Activated B cell treated with CpG ODN at 0.5 μM for 24 hours (primary cell): ENCODE measurements at regions of chr18 and their contacts with region 1.

Region 1: GRCh38 chr18:75478996-75479880 is 51.7 kb upstream of the SMIM21 start:
- DNase-seq: no peak
- ATAC-seq: no peak
- H3K4me3 Mint-ChIP-seq: no peak overlapping the region
- H3K27ac Mint-ChIP-seq: no peak overlapping the region
- H3K4me1 Mint-ChIP-seq: no peaks in the 10 kb centered on the region
- H3K27me3 Mint-ChIP-seq: no peaks in the 10 kb centered on the region
- CTCF ChIP-seq: no peak

Region 2: GRCh38 chr18:74551936-74552555 is 927.2 kb before region 1 on chr18:
- CTCF ChIA-PET with region 1: no interaction called
- POLR2A ChIA-PET with region 1: no interaction called
- intact Hi-C with region 1: loop called (anchors 5 kb)
- DNase-seq: peak; percentile 41
- ATAC-seq: peak; percentile 97
- H3K4me3 Mint-ChIP-seq: no peak overlapping the region
- H3K27ac Mint-ChIP-seq: no peak overlapping the region
- H3K4me1 Mint-ChIP-seq: no peaks in the 10 kb centered on the region
- H3K27me3 Mint-ChIP-seq: peaks cover 14% of the 10 kb centered on the region
- CTCF ChIP-seq: no peak

Region 3: GRCh38 chr18:74806700-74807416 is 672.4 kb before region 1 on chr18:
- CTCF ChIA-PET with region 1: no interaction called
- POLR2A ChIA-PET with region 1: no interaction called
- intact Hi-C with region 1: loop called (anchors 5 kb)
- DNase-seq: no peak
- ATAC-seq: peak; percentile 95
- H3K4me3 Mint-ChIP-seq: peak overlapping the region; percentile 46
- H3K27ac Mint-ChIP-seq: peak overlapping the region; percentile 25
- H3K4me1 Mint-ChIP-seq: peaks cover 17% of the 10 kb centered on the region
- H3K27me3 Mint-ChIP-seq: no peaks in the 10 kb centered on the region
- CTCF ChIP-seq: no peak

Region 4: GRCh38 chr18:74896390-74896991 is 582.7 kb before region 1 on chr18:
- CTCF ChIA-PET with region 1: interaction called, 3 read pairs
- POLR2A ChIA-PET with region 1: no interaction called
- intact Hi-C with region 1: loop called (anchors 5 kb)
- DNase-seq: no peak
- ATAC-seq: peak; percentile 31
- H3K4me3 Mint-ChIP-seq: no peak overlapping the region
- H3K27ac Mint-ChIP-seq: no peak overlapping the region
- H3K4me1 Mint-ChIP-seq: no peaks in the 10 kb centered on the region
- H3K27me3 Mint-ChIP-seq: no peaks in the 10 kb centered on the region
- CTCF ChIP-seq: no peak

Region 5: GRCh38 chr18:75173125-75173432 is 306.2 kb before region 1 on chr18:
- CTCF ChIA-PET with region 1: no interaction called
- POLR2A ChIA-PET with region 1: no interaction called
- intact Hi-C with region 1: loop called (anchors 5 kb)
- DNase-seq: no peak
- ATAC-seq: peak; percentile 89
- H3K4me3 Mint-ChIP-seq: no peak overlapping the region
- H3K27ac Mint-ChIP-seq: peak overlapping the region; percentile 2
- H3K4me1 Mint-ChIP-seq: peaks cover 14% of the 10 kb centered on the region
- H3K27me3 Mint-ChIP-seq: peaks cover 5% of the 10 kb centered on the region
- CTCF ChIP-seq: no peak